ENCODE measurements at regions of chr3 and their contacts with region 1.

Region 1: DNA sequence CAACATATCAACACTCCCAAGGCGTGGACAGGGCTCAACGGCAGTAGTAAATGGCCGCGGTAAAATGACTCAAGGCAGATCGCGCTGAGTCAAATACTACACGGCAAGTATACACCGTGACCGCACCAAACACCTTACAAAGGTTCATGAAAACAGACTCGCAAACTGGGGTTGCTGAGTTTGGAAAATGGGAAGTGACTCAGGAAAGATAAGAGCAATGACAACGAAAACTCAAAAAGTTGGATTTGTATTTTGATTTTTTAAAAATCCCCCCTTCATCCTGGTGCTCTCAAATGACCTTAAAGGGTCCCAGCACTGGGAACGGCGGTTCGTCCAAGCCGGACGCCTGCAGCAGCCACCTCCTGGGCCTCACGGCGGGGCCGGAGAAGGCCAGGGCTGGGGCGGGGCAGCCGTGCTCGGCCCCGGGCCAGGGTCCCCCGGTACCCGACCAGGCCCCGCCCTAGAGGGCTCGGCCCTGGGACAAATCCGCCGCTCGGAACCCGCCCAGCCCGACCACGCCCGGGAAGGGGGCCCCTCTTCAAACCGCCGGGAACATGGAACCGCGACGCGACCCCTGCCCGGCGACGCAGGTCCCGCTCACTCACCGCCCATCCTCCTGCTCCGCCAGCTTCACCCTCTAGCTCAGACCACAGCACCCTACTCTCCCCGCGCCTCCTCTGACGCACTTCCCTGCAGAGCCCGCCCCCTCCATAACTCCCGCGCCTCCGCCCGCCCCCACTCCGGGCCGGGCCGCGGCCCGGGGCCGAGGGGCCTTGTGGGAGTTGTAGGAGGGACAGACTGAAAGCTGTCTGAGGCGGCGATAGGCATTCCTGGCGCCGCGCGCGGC is at the start of gene CLDND1:
- DNase-seq: peak; percentile 94
- H3K4me3 Mint-ChIP-seq: peak within 1 kb of the TSS; percentile 92
- H3K27ac Mint-ChIP-seq: peak within 1 kb of the TSS; percentile 95
- H3K4me1 Mint-ChIP-seq: peaks cover 65% of the 10 kb centered on the region
- H3K27me3 Mint-ChIP-seq: no peaks in the 10 kb centered on the region
- total RNA-seq, gene CLDND1: 326 and 338 TPM in 2 replicates

Region 2: DNA sequence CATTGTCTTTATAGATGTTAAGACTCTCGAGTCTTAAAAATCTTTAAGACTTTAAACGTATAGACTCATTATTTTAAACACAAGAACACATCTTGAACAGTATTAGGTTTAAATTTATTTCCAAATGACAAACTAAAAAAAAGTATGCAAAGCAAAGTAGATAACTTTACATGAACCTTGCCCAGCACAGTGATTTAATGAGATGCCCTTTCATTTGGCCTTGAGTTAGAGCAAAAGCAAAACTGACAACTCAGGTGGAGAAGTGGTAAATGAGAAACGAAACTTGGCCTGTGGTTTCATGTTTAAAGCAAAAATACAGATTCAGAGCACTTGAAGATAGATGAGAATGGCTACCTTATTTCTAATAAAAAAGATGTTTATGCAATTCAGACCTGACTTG is 17.9 kb after region 1 on chr3:
- intact Hi-C with region 1: loop called (anchors 1 kb)
- DNase-seq: no peak
- H3K4me3 Mint-ChIP-seq: no peak overlapping the region
- H3K27ac Mint-ChIP-seq: peak overlapping the region; percentile 17
- H3K4me1 Mint-ChIP-seq: peaks cover 63% of the 10 kb centered on the region
- H3K27me3 Mint-ChIP-seq: no peaks in the 10 kb centered on the region

Region 3: GRCh38 chr3:98563661-98564281 is 41.3 kb after region 1 on chr3:
- intact Hi-C with region 1: loop called (anchors 2 kb)
- DNase-seq: no peak
- H3K4me3 Mint-ChIP-seq: no peak overlapping the region
- H3K27ac Mint-ChIP-seq: no peak overlapping the region
- H3K4me1 Mint-ChIP-seq: peaks cover 67% of the 10 kb centered on the region
- H3K27me3 Mint-ChIP-seq: no peaks in the 10 kb centered on the region

Region 4: DNA sequence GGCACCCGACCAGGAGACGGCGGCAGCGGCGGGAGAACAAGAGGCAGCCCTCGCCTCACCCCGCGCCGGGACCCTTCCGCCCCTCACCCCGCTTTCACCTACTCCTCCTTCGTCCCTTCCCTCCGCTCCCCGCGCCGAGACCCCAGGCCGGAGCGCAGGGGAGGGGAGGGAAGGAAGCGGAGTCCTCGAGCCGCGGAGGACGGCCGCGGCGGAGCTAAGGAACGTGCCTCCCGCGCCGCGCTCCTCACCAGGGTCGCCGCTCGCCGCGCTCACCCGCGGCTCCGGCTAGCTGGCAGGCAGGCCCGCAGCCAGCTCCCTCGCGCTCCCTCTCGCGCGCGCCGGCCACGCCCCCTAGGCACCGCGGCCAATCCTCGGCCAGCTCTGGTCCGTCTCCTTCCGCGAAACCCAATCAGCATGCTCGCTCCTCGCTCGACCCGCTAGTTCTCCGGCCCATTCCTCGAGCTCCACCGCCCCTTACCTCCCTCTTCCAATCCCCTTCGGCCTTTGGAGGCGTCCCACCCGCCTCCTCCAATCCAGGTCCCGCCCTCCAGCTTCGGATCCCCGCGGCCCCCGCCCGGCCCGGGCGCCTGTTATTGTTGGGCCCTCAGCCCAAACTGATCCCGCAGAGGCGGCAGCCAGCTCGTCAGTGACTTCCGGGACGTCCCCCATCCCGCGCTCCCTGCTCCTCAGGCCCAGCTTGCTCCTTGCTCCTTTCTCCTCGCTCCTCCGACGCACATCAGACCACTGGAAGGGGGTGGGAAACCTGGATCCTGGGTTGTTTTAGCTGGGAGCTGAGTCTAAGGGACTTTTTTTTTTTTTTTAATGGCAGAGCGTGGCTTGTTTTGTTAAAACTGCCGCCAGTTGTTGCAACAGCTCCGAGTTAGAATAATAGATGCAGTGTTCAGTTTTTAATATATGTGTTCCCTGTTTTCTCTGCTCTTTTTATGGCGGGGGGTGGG is 379.2 kb after region 1 on chr3 and contains the start of gene DCBLD2:
- intact Hi-C with region 1: loop called (anchors 5 kb)
- DNase-seq: peak; percentile 95
- H3K4me3 Mint-ChIP-seq: peak within 1 kb of the TSS; percentile 83
- H3K27ac Mint-ChIP-seq: peak within 1 kb of the TSS; percentile 57
- H3K4me1 Mint-ChIP-seq: peaks cover 14% of the 10 kb centered on the region
- H3K27me3 Mint-ChIP-seq: peaks cover 20% of the 10 kb centered on the region
- total RNA-seq, gene DCBLD2: 4.2 and 5.1 TPM in 2 replicates

Region 5: GRCh38 chr3:98994128-98994762 is 471.8 kb after region 1 on chr3:
- intact Hi-C with region 1: no loop called
- DNase-seq: no peak
- H3K4me3 Mint-ChIP-seq: no peak overlapping the region
- H3K27ac Mint-ChIP-seq: no peak overlapping the region
- H3K4me1 Mint-ChIP-seq: no peaks in the 10 kb centered on the region
- H3K27me3 Mint-ChIP-seq: peaks cover 13% of the 10 kb centered on the region

Region 6: DNA sequence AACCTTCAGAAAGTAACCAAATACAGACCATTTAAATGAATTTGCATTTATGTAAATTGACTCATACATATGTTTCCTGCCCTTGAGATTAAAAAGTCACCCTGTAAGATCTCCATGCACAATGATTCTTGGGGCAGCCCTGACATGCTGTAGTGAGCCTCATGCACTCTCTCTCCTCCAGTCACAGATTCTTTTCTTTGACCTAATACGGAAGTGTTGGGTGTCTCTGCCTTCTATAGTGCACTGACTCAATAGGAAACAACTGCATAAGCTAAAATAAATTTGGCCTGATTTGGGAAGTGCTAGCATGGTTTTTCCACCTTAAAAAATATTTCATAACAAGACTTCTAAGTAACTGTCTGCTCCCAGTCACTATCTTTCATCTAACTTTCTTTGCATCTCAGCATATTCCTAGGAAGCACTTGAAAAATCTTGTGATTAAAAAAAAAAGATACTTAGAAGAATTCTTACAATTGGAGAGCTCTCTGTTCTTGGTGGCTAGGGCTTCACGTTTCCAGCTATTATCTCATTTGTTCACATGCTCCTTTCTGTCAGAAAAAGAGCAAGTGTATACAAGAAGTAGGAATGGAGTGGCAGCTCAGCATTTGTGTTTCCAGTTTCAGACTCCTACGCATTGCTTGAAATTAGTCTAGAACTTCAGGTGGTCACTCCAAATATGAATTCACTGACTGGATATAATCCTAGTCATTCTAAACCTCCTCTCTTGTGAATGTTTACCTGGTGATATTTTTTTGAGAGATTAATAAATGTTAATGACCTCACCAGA is 908.1 kb after region 1 on chr3:
- intact Hi-C with region 1: no loop called
- DNase-seq: no peak
- H3K4me3 Mint-ChIP-seq: no peak overlapping the region
- H3K27ac Mint-ChIP-seq: no peak overlapping the region
- H3K4me1 Mint-ChIP-seq: no peaks in the 10 kb centered on the region
- H3K27me3 Mint-ChIP-seq: no peaks in the 10 kb centered on the region